Activated CD4-positive, alpha-beta memory T cell treated with anti-CD3 and anti-CD28 coated beads for 36 hours (primary cell): ENCODE measurements at regions of chr2 and their contacts with region 1.

Region 1: DNA sequence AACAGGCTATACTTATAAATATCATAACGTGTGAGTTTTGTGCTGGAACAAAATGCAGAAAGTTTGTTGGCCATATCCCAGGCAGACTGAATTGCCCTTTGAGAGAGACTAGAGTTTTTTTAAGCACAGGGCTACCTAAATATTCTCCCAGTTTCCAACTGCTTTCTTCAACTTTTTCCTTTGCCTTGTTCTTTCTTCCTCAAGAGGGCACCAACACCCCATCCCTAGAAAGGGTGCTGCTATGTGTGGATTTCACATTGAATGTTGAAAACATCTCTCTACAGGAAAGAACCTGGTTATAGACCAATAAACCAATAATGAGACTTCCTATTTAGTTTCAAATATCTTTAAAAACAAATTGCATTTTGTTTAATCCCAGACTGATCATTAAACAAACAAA is 87.9 kb downstream of the ICOS start:
- DNase-seq: peak; percentile 47
- H3K4me3 Mint-ChIP-seq: no peak overlapping the region
- H3K27ac Mint-ChIP-seq: no peak overlapping the region
- H3K4me1 Mint-ChIP-seq: peaks cover 64% of the 10 kb centered on the region
- H3K27me3 Mint-ChIP-seq: no peaks in the 10 kb centered on the region

Region 2: DNA sequence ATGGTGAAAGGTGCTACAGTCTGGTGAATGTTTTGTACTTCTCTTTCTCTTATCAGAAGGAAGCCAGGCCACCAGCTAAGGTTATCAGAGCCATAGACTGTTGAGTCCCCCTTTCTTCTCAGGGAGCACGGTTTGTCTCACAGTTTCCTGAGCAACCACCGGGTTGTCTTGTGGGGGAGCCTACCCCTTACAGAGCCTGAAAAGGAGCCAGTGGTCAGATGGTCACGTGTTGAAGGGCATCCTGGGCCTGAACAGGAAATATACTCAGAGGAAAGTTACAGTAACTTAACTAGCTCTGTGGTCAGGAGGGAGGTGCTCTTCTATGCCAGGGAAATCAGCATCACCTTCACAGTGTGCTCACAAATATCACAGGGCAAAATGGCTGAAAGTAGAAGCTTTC is 306.4 kb before region 1 on chr2:
- CTCF ChIA-PET with region 1: no interaction called
- POLR2A ChIA-PET with region 1: no interaction called
- intact Hi-C with region 1: loop called (anchors 2 kb)
- DNase-seq: peak; percentile 85
- H3K4me3 Mint-ChIP-seq: peak overlapping the region; percentile 69
- H3K27ac Mint-ChIP-seq: peak overlapping the region; percentile 94
- H3K4me1 Mint-ChIP-seq: peaks cover 96% of the 10 kb centered on the region
- H3K27me3 Mint-ChIP-seq: no peaks in the 10 kb centered on the region

Region 3: DNA sequence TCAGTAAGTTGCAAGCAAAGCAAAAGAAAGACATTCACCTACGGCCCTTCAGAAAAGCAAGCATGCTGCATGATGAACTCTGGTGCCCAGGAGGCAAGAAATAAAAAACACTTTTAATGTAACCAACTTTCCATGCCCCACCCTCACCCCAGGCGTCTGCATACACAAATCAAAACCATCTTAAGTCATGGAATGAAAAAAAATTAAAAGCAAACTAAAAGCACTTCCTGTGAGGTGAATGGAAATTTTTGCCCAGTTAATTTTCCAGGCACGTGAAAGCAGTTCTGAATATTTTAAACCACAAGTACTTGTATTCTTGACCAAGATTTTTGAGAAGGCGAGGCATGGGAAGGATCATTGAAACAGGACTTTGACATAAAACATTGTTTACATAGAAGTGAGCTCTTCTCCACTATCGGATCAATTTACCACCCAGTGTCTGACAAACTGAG is 90.4 kb before region 1 on chr2:
- CTCF ChIA-PET with region 1: interaction called, 6 read pairs
- POLR2A ChIA-PET with region 1: interaction called, 7 read pairs
- intact Hi-C with region 1: loop called (anchors 1 kb)
- DNase-seq: peak; percentile 76
- H3K4me3 Mint-ChIP-seq: peak overlapping the region; percentile 74
- H3K27ac Mint-ChIP-seq: peak overlapping the region; percentile 94
- H3K4me1 Mint-ChIP-seq: peaks cover 59% of the 10 kb centered on the region
- H3K27me3 Mint-ChIP-seq: no peaks in the 10 kb centered on the region

Region 4: DNA sequence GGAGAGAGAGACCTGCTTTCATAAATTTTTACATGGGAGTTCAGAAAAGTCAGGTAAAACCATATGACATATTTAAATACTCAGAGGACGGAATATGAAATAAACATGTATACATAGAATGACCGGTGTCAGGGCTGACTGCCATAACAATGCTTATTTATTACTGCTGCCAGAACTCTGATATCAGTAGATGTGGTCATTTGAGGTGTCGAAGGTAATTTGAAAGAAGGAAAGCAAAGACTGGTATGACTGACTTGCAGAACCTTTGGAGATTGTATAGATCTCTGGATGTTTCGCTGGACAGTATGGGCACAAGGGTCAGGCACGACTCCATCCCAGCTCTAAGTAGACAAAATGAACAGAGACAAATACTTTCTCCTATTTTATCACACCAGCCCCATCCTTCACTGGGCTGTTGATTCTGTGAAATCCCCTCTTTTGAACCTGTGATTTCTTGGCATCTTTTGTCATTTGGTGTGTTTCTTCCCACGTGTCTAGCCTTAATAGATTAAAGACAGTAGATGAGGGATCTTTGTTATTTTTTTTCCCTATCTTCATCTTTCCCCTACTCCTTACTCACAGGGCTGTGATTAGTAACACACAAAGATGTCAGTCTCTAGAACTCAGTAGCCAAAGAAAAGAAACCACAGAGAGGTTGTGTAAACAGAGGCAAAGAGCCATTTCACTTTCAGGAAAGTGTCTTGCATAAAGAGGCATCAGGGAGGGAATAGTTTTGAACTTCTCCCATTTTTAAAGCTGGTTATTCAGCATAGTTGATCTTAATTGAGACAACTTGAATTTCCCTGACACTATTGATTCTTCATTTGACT is 26.3 kb before region 1 on chr2:
- CTCF ChIA-PET with region 1: interaction called, 5 read pairs
- POLR2A ChIA-PET with region 1: interaction called, 4 read pairs
- intact Hi-C with region 1: loop called (anchors 1 kb)
- DNase-seq: no peak
- H3K4me3 Mint-ChIP-seq: peak overlapping the region; percentile 21
- H3K27ac Mint-ChIP-seq: peak overlapping the region; percentile 82
- H3K4me1 Mint-ChIP-seq: peaks cover 65% of the 10 kb centered on the region
- H3K27me3 Mint-ChIP-seq: no peaks in the 10 kb centered on the region

Region 5: DNA sequence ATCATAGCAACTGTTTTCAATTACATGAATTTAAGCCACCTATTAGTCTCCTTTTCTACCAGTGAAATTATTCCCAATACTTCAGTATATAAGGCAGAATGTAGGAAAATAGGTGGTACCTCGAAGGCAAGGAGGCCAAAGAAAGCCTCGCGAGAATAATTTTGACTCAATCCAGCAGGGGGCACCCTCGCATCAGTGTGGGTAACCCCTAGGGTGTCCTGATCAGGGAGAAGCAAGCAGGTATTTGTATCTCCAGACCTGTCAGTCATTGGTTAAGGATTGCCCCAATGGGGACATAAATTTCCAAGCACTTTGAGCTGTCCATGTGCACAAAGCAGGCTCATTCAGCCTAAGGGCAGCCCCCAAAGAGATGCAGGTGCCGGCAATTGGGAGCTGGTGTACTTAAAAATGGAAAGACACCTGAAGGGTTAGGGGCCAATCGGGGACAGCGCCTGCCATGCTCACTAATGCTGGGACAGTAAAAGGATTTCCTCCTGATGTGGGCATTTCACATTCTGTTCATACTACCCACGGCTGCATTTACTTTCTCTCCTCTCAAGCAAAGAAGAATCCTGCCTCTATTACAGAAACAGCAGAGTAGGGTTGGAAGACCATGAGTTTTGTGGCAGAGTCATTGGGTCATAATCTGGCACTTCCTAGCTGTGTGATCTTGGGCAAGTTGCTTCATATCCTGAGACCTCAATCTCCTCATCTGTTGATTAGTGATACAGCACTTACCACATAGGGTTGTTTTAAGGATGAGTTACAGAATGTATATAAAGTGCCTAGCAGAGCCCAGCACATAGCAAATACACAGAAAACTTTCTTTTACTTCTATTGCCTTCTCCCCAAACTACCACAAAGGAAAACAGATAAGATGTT is 48.2 kb after region 1 on chr2:
- CTCF ChIA-PET with region 1: interaction called, 8 read pairs
- POLR2A ChIA-PET with region 1: no interaction called
- intact Hi-C with region 1: loop called (anchors 2 kb)
- DNase-seq: peak; percentile 85
- H3K4me3 Mint-ChIP-seq: no peak overlapping the region
- H3K27ac Mint-ChIP-seq: no peak overlapping the region
- H3K4me1 Mint-ChIP-seq: no peaks in the 10 kb centered on the region
- H3K27me3 Mint-ChIP-seq: peaks cover 3% of the 10 kb centered on the region

Region 6: DNA sequence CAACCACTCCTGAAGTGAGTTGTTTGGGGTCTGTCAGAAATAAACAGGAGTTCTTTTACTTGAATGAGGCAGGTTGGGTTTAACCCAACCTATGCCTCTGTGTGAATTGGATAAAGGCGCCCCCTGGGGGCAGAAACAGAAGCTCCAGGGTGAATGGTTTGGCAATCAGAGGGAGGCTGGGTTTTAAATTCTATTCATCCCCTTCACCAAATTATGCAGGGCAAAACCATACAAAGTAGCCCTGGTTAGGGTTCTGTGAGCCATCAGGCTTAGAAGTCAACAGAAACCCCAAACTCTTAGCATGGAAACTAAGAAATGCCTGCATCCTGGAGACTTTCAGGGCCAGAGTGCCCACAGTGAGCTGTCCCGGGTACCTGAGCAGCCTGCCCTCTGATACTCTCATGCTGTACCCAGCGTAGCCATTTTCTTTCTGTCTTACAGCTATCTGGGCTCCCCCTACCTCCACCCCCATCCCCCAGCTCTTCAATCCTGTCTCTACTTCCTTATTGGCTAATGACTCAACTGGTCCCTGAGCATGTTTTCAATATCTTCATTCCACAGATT is 153.6 kb after region 1 on chr2:
- CTCF ChIA-PET with region 1: interaction called, 36 read pairs
- POLR2A ChIA-PET with region 1: interaction called, 3 read pairs
- intact Hi-C with region 1: loop called (anchors 2 kb)
- DNase-seq: peak; percentile 82
- H3K4me3 Mint-ChIP-seq: no peak overlapping the region
- H3K27ac Mint-ChIP-seq: no peak overlapping the region
- H3K4me1 Mint-ChIP-seq: peaks cover 3% of the 10 kb centered on the region
- H3K27me3 Mint-ChIP-seq: peaks cover 8% of the 10 kb centered on the region